GM12878 (cell line): ENCODE measurements at regions of chr15 and their contacts with region 1.

Region 1: GRCh38 chr15:85730001-85730820 is 64.5 kb downstream of the KLHL25 start:
- DNase-seq: no peak
- ATAC-seq: peak; percentile 97
- H3K4me3 ChIP-seq: no peak overlapping the region
- H3K27ac ChIP-seq: no peak overlapping the region
- H3K4me1 ChIP-seq: no peaks in the 10 kb centered on the region
- H3K27me3 ChIP-seq: no peaks in the 10 kb centered on the region
- CTCF ChIP-seq: peak; percentile 50 to 74 (median 72); a peak in 5 of 6 replicates
- EP300 ChIP-seq: no peak
- POLR2A ChIP-seq: no peak
- RAD21 ChIP-seq: peak; percentile 72

Region 2: DNA sequence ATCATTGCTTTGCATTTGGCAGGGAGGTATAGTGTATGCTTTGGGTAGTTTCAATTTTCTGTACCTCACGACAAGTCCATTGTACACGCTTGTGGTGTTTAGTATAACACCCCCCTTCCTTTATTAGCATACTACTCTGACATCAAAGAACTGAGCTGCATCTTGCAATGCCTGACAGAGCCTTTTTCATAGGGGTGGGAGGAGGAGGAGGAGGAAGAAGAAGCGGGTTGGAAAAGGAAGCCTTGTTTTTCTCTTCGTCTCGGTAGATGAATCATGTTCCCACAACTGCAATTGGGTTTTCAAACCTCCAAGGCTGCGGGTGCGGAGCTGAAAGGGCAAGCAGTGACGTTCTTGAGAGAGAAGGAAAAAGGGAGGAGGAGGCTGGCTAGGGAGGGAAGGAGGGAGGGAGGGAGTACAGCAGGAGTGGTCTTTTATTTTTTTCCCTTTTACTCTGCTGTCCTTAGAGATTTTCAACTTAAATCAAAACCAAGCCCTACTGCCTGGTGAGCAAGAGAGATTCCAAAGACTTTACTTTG is 111.2 kb before region 1 on chr15:
- CTCF ChIA-PET with region 1: interaction called, 33 read pairs
- POLR2A ChIA-PET with region 1: interaction called, 3 read pairs
- RAD21 ChIA-PET with region 1: interaction called, 4 read pairs
- SMC1A ChIA-PET with region 1: interaction called, 18 read pairs
- in situ Hi-C with region 1: no loop called
- intact Hi-C with region 1: no loop called
- DNase-seq: no peak
- ATAC-seq: peak; percentile 88
- H3K4me3 ChIP-seq: no peak overlapping the region
- H3K27ac ChIP-seq: peak overlapping the region; percentile 34; the same call in 1 of the 2 replicates
- H3K4me1 ChIP-seq: peaks cover 14% of the 10 kb centered on the region
- H3K27me3 ChIP-seq: no peaks in the 10 kb centered on the region
- CTCF ChIP-seq: no peak
- EP300 ChIP-seq: no peak
- POLR2A ChIP-seq: no peak
- RAD21 ChIP-seq: no peak

Region 3: GRCh38 chr15:85707519-85708338 is 22.5 kb before region 1 on chr15:
- CTCF ChIA-PET with region 1: interaction called, 25 read pairs
- POLR2A ChIA-PET with region 1: no interaction called
- RAD21 ChIA-PET with region 1: interaction called, 5 read pairs
- SMC1A ChIA-PET with region 1: interaction called, 8 read pairs
- in situ Hi-C with region 1: no loop called
- intact Hi-C with region 1: no loop called
- DNase-seq: no peak
- ATAC-seq: peak; percentile 5
- H3K4me3 ChIP-seq: peak overlapping the region; percentile 60
- H3K27ac ChIP-seq: peak overlapping the region; percentile 99
- H3K4me1 ChIP-seq: peaks cover 66% of the 10 kb centered on the region
- H3K27me3 ChIP-seq: no peaks in the 10 kb centered on the region
- CTCF ChIP-seq: no peak
- EP300 ChIP-seq: no peak
- POLR2A ChIP-seq: no peak
- RAD21 ChIP-seq: no peak

Region 4: DNA sequence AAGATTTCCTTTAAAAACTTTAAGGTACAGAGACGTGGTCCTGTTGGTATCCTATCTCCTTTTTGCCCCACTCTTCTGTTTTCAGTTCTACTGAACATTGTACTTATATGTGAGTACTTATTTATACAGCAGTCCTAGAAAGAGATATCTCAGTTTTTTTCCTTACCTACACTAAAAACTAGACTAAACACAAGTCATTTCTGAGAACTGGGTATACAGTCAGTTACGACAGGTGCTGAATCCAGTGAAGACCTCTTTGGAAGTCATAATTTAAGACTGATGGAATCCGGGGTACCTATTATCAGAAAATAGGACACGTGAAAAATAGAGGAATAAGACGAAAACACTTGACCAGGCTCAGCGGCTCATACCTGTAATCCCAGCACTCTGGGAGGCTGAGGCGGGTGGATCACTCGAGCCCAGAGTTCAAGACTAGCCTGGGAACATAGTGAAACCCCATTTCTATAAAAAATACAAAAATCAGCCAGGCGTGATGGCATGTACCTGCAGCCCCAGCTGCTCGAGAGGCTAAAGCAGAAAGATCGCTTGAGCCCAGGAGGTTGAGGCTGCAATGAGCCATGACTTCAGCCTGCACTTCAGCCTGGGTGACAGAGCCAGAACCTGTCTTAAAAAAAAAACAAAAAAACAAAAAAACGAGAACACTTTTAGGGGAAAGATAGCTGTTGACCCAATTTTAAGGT is 11.8 kb before region 1 on chr15:
- CTCF ChIA-PET with region 1: interaction called, 25 read pairs
- POLR2A ChIA-PET with region 1: interaction called, 3 read pairs
- RAD21 ChIA-PET with region 1: interaction called, 8 read pairs
- SMC1A ChIA-PET with region 1: interaction called, 8 read pairs
- in situ Hi-C with region 1: no loop called
- intact Hi-C with region 1: no loop called
- DNase-seq: no peak
- ATAC-seq: peak; percentile 68
- H3K4me3 ChIP-seq: no peak overlapping the region; the same call in 1 of the 2 replicates
- H3K27ac ChIP-seq: peak overlapping the region; percentile 82
- H3K4me1 ChIP-seq: peaks cover 42% of the 10 kb centered on the region
- H3K27me3 ChIP-seq: no peaks in the 10 kb centered on the region
- CTCF ChIP-seq: no peak
- EP300 ChIP-seq: no peak
- POLR2A ChIP-seq: no peak
- RAD21 ChIP-seq: no peak

Region 5: GRCh38 chr15:85742186-85742821 is 12.1 kb after region 1 on chr15:
- CTCF ChIA-PET with region 1: interaction called, 11 read pairs
- POLR2A ChIA-PET with region 1: no interaction called
- RAD21 ChIA-PET with region 1: interaction called, 6 read pairs
- SMC1A ChIA-PET with region 1: interaction called, 3 read pairs
- in situ Hi-C with region 1: no loop called
- intact Hi-C with region 1: no loop called
- DNase-seq: no peak
- ATAC-seq: no peak
- H3K4me3 ChIP-seq: no peak overlapping the region
- H3K27ac ChIP-seq: no peak overlapping the region
- H3K4me1 ChIP-seq: no peaks in the 10 kb centered on the region
- H3K27me3 ChIP-seq: no peaks in the 10 kb centered on the region
- CTCF ChIP-seq: no peak
- EP300 ChIP-seq: no peak
- POLR2A ChIP-seq: no peak; the same call in 1 of the 2 replicates
- RAD21 ChIP-seq: no peak